Activated CD8-positive, alpha-beta T cell treated with anti-CD3 and anti-CD28 coated beads, Interleukin-2, amount 10 ng/mL, durations not matched to agents 7 days and 5 days (primary cell): ENCODE measurements at regions of chr14 and their contacts with region 1.

Region 1: GRCh38 chr14:24215495-24216344 is at the start of gene MDP1:
- DNase-seq: peak; percentile 93
- ATAC-seq: peak; percentile 77
- H3K4me3 Mint-ChIP-seq: peak within 1 kb of the TSS; percentile 94
- H3K27ac Mint-ChIP-seq: peak within 1 kb of the TSS; percentile 97
- H3K4me1 Mint-ChIP-seq: peaks cover 46% of the 10 kb centered on the region
- H3K27me3 Mint-ChIP-seq: no peaks in the 10 kb centered on the region
- total RNA-seq, gene MDP1: 16.9 to 18.2 TPM

Region 2: GRCh38 chr14:24108336-24108874 is 107.3 kb before region 1 on chr14:
- CTCF ChIA-PET with region 1: interaction called, 11 read pairs
- POLR2A ChIA-PET with region 1: interaction called, 5 read pairs
- DNase-seq: no peak
- ATAC-seq: no peak
- H3K4me3 Mint-ChIP-seq: no peak overlapping the region
- H3K27ac Mint-ChIP-seq: peak overlapping the region; percentile 97
- H3K4me1 Mint-ChIP-seq: peaks cover 42% of the 10 kb centered on the region
- H3K27me3 Mint-ChIP-seq: no peaks in the 10 kb centered on the region

Region 3: DNA sequence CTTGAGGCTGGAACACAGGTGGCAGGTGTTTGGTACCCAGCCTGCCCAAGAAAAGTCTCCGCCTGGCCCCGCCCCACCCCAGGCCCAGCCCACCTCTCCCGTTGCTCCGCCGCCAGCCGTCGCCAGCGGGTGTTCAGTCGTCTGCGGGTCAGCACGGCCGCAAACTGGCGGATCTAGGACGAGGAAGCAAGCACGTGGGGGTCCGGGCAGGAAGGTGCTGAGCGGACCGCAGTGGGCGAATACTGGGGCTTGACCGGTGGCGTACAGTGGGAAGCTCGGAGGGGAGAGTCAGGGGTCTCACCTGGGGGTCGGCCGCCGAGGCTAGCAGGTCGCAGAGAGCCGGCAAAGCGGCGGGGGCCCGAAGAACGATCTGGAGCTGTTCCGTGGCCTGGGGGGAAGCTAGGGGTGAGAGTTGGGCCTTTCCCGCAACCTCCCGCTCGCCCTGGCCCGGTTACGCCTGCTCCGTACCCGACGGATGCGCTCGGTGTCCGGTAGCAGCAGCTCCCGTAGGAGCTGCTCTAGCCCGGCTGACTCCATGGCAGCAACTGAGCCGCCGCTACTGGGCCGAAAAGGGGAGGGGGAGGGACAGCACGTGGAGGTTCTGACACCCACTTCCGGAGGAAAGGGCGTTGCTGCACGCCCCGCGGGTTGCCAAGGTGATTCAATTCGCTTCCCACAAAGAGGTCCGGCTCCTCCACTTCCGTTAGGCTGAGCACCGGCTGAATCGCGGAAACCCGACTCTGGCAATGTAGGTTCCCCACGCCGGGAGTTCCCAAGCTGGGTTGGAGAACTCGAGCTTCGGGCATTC is 27.3 kb before region 1 on chr14 and contains the start of gene IPO4:
- CTCF ChIA-PET with region 1: interaction called, 5 read pairs
- POLR2A ChIA-PET with region 1: interaction called, 87 read pairs
- DNase-seq: peak; percentile 97
- ATAC-seq: peak; percentile 84
- H3K4me3 Mint-ChIP-seq: peak within 1 kb of the TSS; percentile 92
- H3K27ac Mint-ChIP-seq: peak within 1 kb of the TSS; percentile 87
- H3K4me1 Mint-ChIP-seq: peaks cover 49% of the 10 kb centered on the region
- H3K27me3 Mint-ChIP-seq: no peaks in the 10 kb centered on the region
- total RNA-seq, gene IPO4: 56.3 to 60.1 TPM

Region 4: GRCh38 chr14:24232121-24232644 is 16.5 kb after region 1 on chr14 and contains the start of gene NEDD8:
- CTCF ChIA-PET with region 1: interaction called, 9 read pairs
- POLR2A ChIA-PET with region 1: interaction called, 11 read pairs
- DNase-seq: peak; percentile 93
- ATAC-seq: peak; percentile 89
- H3K4me3 Mint-ChIP-seq: peak within 1 kb of the TSS; percentile 89
- H3K27ac Mint-ChIP-seq: peak within 1 kb of the TSS; percentile 90
- H3K4me1 Mint-ChIP-seq: peaks cover 46% of the 10 kb centered on the region
- H3K27me3 Mint-ChIP-seq: no peaks in the 10 kb centered on the region
- total RNA-seq, gene NEDD8: 214 to 222 TPM

Region 5: GRCh38 chr14:24271134-24271833 is 55.6 kb after region 1 on chr14 and contains the start of gene RABGGTA:
- CTCF ChIA-PET with region 1: interaction called, 6 read pairs
- POLR2A ChIA-PET with region 1: interaction called, 24 read pairs
- DNase-seq: peak; percentile 93
- ATAC-seq: peak; percentile 94
- H3K4me3 Mint-ChIP-seq: peak within 1 kb of the TSS; percentile 90
- H3K27ac Mint-ChIP-seq: peak within 1 kb of the TSS; percentile 91
- H3K4me1 Mint-ChIP-seq: peaks cover 47% of the 10 kb centered on the region
- H3K27me3 Mint-ChIP-seq: no peaks in the 10 kb centered on the region
- total RNA-seq, gene RABGGTA: 47.7 to 51.8 TPM

Region 6: DNA sequence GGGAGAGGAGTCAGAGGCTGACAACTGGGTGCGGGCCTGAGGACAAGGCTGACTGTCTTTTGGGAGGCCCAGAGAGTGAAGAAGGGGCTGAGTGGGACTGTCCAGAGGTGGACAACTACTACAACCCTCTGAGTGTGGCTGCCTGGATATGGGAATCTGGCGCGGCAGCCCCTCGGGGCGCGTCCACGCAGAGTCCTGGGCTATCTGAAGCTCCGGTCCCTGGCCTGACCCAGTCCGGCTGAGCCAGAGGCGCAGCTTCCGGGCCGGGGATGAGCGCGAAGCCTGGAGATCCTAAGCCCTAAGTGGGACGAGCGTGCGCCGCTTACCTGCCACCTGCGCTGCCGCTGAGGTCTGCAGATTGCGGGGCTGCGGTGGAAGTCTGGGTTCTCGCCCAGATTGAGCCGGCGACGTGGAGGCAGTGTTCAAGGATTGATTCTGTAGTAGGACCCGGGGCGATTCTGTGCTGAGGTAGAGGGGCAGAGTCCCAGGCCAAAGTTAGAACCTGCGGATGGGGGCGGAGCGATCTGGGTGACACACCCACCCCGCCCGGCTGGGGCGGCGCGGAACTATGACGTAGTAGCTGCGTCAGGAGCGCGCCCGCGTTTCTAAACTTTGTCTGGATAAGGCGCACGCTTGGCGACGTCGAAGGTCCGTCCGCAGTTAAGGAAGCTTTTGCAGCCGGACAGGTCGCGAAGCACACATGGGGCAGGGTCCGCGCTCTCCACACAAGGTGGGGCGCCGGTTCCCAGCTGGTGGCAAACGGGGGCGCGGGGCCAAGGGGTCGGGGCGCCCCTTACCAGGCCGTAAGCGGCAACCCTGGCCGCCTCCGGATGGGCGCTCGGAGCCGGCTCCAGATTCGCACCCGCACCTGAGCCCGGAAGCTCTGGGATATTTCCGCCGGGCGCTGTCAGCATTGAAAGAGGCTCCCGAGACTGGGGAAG is 83.8 kb after region 1 on chr14 and contains the starts of genes DHRS1 and NOP9:
- CTCF ChIA-PET with region 1: interaction called, 47 read pairs
- POLR2A ChIA-PET with region 1: interaction called, 9 read pairs
- DNase-seq: peak; percentile 94
- ATAC-seq: peak; percentile 83
- H3K4me3 Mint-ChIP-seq: peak within 1 kb of the TSS; percentile 91
- H3K27ac Mint-ChIP-seq: peak within 1 kb of the TSS; percentile 91
- H3K4me1 Mint-ChIP-seq: peaks cover 53% of the 10 kb centered on the region
- H3K27me3 Mint-ChIP-seq: no peaks in the 10 kb centered on the region
- total RNA-seq, gene DHRS1: 28.6 to 33.9 TPM
- total RNA-seq, gene NOP9: 35.2 to 36.7 TPM

Region 7: GRCh38 chr14:24473211-24473610 is 257.5 kb after region 1 on chr14:
- CTCF ChIA-PET with region 1: no interaction called
- POLR2A ChIA-PET with region 1: no interaction called
- DNase-seq: no peak
- ATAC-seq: no peak
- H3K4me3 Mint-ChIP-seq: no peak overlapping the region
- H3K27ac Mint-ChIP-seq: no peak overlapping the region
- H3K4me1 Mint-ChIP-seq: peaks cover 12% of the 10 kb centered on the region
- H3K27me3 Mint-ChIP-seq: peaks cover 14% of the 10 kb centered on the region